Activated T-helper 2 cell treated with anti-CD3 and anti-CD28 coated beads, Interferon-gamma antibody, Interleukin-2, Interleukin-4, amounts not matched to agents 10 μg/mL and 5 μg/mL and 100 μg/mL, durations not matched to agents 14 hours and 24 hours and 36 hours (primary cell): ENCODE measurements at regions of chr2 and their contacts with region 1.

Region 1: GRCh38 chr2:213065583-213066442 is 85.6 kb downstream of the IKZF2 start:
- DNase-seq: no peak
- H3K4me3 Mint-ChIP-seq: peak overlapping the region; percentile 28
- H3K27ac Mint-ChIP-seq: no peak overlapping the region
- H3K4me1 Mint-ChIP-seq: peaks cover 27% of the 10 kb centered on the region
- H3K27me3 Mint-ChIP-seq: peaks cover 36% of the 10 kb centered on the region

Region 2: DNA sequence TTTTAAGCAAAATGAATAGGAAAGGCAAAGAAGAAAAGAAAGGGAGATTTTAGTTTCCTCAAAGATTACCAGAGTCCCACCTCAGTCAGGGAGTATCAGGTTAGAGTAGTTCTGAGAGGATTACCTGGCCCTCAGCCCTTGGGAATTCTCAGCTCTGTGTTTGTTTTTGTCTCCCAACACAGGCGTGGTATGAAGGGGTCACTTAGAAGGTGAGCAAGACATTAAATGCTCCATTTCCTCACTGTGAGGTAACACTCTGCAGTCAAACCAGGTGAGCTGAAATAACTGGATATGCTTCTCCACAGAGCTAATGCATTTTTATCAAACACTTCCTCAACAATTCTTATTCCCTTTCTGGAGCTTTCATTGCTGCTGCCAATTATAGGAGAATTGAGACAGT is 146.6 kb before region 1 on chr2:
- intact Hi-C with region 1: no loop called
- DNase-seq: no peak
- H3K4me3 Mint-ChIP-seq: no peak overlapping the region
- H3K27ac Mint-ChIP-seq: no peak overlapping the region
- H3K4me1 Mint-ChIP-seq: peaks cover 19% of the 10 kb centered on the region
- H3K27me3 Mint-ChIP-seq: peaks cover 10% of the 10 kb centered on the region

Region 3: DNA sequence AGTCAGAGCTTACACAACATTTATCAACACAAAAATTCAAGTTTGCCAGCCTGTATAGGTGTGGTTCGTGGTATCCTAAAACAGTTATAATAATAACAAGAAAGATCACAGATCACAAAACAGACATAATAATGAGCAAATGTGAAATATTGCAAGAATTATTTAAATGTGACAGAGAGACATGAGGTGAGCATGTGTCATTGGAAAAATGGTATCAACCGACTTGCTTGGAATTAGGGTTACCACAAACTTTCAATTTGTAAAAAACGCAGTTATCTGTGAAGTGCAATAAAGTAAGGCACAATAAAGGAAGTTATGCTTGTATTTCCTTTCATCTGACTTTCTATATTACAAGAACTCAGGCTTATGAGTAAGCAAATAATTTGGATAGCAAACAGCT is 31.2 kb before region 1 on chr2:
- intact Hi-C with region 1: loop called (anchors 5 kb)
- DNase-seq: no peak
- H3K4me3 Mint-ChIP-seq: no peak overlapping the region
- H3K27ac Mint-ChIP-seq: peak overlapping the region; percentile 72
- H3K4me1 Mint-ChIP-seq: peaks cover 25% of the 10 kb centered on the region
- H3K27me3 Mint-ChIP-seq: peaks cover 14% of the 10 kb centered on the region